Right ventricle myocardium inferior (tissue), 1 donor: ENCODE measurements at regions of chr16 and their contacts with region 1.

Region 1: GRCh38 chr16:72467157-72467759 is 295.3 kb upstream of the PMFBP1 start:
- DNase-seq: no peak
- ATAC-seq: no peak

Region 2: GRCh38 chr16:72241930-72242329 is 225.3 kb before region 1 on chr16:
- intact Hi-C with region 1: loop called (anchors 5 kb)
- DNase-seq: no peak
- ATAC-seq: peak; percentile 46

Region 3: GRCh38 chr16:72530444-72530843 is 63.2 kb after region 1 on chr16:
- intact Hi-C with region 1: no loop called
- DNase-seq: no peak
- ATAC-seq: no peak